GM12878 (cell line): ENCODE measurements at regions of chr4 and their contacts with region 1.

Region 1: GRCh38 chr4:93764639-93765246 is 63.8 kb upstream of the ATOH1 start:
- DNase-seq: no peak
- ATAC-seq: peak; percentile 86
- H3K4me3 ChIP-seq: no peak overlapping the region
- H3K27ac ChIP-seq: no peak overlapping the region
- H3K4me1 ChIP-seq: no peaks in the 10 kb centered on the region
- H3K27me3 ChIP-seq: no peaks in the 10 kb centered on the region; a peak in 1 of 4 replicates
- CTCF ChIP-seq: peak; percentile 62 to 83 (median 65); a peak in 5 of 6 replicates
- EP300 ChIP-seq: no peak
- POLR2A ChIP-seq: no peak
- RAD21 ChIP-seq: peak; percentile 100

Region 2: DNA sequence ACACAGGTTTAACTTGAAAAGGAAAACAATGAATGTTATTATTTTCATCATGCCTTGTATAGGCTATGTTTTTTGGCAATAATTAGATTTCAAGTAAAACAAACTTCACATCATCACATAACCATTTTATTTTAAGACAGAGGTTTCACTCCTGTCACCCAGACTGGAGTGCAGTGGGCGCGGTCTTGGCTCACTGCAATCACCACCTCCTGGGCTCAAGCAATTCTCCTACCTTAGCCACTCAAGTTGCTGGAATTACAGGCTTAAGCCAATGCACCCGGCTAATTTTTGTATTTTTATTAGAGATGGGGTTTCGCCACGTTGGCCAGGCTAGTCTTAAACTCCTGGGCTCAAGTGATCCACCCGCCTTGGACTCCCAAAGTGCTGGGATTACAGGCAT is 594.8 kb before region 1 on chr4:
- CTCF ChIA-PET with region 1: no interaction called
- POLR2A ChIA-PET with region 1: no interaction called
- RAD21 ChIA-PET with region 1: no interaction called
- SMC1A ChIA-PET with region 1: no interaction called
- in situ Hi-C with region 1: no loop called
- intact Hi-C with region 1: loop called (anchors 10 kb)
- DNase-seq: no peak
- ATAC-seq: no peak
- H3K4me3 ChIP-seq: no peak overlapping the region
- H3K27ac ChIP-seq: no peak overlapping the region
- H3K4me1 ChIP-seq: no peaks in the 10 kb centered on the region
- H3K27me3 ChIP-seq: no peaks in the 10 kb centered on the region
- CTCF ChIP-seq: no peak
- EP300 ChIP-seq: no peak
- POLR2A ChIP-seq: no peak
- RAD21 ChIP-seq: no peak

Region 3: DNA sequence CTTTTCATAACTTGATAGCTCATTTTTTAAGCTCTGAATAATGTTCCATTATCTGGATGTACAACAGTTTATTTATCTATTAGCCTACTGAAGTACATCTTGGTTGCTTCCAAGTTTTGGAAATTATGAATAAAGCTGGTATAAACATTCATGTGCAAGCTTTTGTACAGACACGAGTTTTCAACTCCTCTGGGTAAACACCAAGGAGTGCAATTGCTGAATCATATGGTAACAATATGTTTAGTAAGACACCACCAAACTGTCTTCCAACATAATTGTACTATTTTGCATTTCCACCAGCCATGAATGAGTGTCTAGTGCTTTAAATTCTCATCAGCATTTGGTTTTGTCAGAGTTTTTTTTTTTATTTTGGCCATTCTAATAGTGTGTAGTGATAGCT is 202.9 kb before region 1 on chr4:
- CTCF ChIA-PET with region 1: no interaction called
- POLR2A ChIA-PET with region 1: no interaction called
- RAD21 ChIA-PET with region 1: no interaction called
- SMC1A ChIA-PET with region 1: interaction called, 3 read pairs
- in situ Hi-C with region 1: no loop called
- intact Hi-C with region 1: loop called (anchors 10 kb)
- DNase-seq: no peak
- ATAC-seq: no peak
- H3K4me3 ChIP-seq: no peak overlapping the region
- H3K27ac ChIP-seq: no peak overlapping the region
- H3K4me1 ChIP-seq: no peaks in the 10 kb centered on the region
- H3K27me3 ChIP-seq: no peaks in the 10 kb centered on the region
- CTCF ChIP-seq: no peak
- EP300 ChIP-seq: no peak
- POLR2A ChIP-seq: no peak
- RAD21 ChIP-seq: no peak

Region 4: GRCh38 chr4:93684571-93684970 is 80.2 kb before region 1 on chr4:
- CTCF ChIA-PET with region 1: no interaction called
- POLR2A ChIA-PET with region 1: no interaction called
- RAD21 ChIA-PET with region 1: no interaction called
- SMC1A ChIA-PET with region 1: no interaction called
- in situ Hi-C with region 1: no loop called
- intact Hi-C with region 1: no loop called
- DNase-seq: no peak
- ATAC-seq: no peak
- H3K4me3 ChIP-seq: no peak overlapping the region
- H3K27ac ChIP-seq: no peak overlapping the region
- H3K4me1 ChIP-seq: no peaks in the 10 kb centered on the region
- H3K27me3 ChIP-seq: no peaks in the 10 kb centered on the region; a peak in 1 of 4 replicates
- CTCF ChIP-seq: no peak
- EP300 ChIP-seq: no peak
- POLR2A ChIP-seq: no peak
- RAD21 ChIP-seq: no peak

Region 5: GRCh38 chr4:93700571-93700970 is 64.2 kb before region 1 on chr4:
- CTCF ChIA-PET with region 1: interaction called, 3 read pairs
- POLR2A ChIA-PET with region 1: no interaction called
- RAD21 ChIA-PET with region 1: no interaction called
- SMC1A ChIA-PET with region 1: interaction called, 4 read pairs
- in situ Hi-C with region 1: loop called (anchors 10 kb)
- intact Hi-C with region 1: no loop called
- DNase-seq: no peak
- ATAC-seq: no peak
- H3K4me3 ChIP-seq: no peak overlapping the region
- H3K27ac ChIP-seq: no peak overlapping the region
- H3K4me1 ChIP-seq: no peaks in the 10 kb centered on the region
- H3K27me3 ChIP-seq: no peaks in the 10 kb centered on the region
- CTCF ChIP-seq: no peak
- EP300 ChIP-seq: no peak
- POLR2A ChIP-seq: no peak
- RAD21 ChIP-seq: no peak

Region 6: GRCh38 chr4:93710101-93710846 is 54.5 kb before region 1 on chr4:
- CTCF ChIA-PET with region 1: interaction called, 82 read pairs
- POLR2A ChIA-PET with region 1: interaction called, 3 read pairs
- RAD21 ChIA-PET with region 1: interaction called, 13 read pairs
- SMC1A ChIA-PET with region 1: interaction called, 100 read pairs
- in situ Hi-C with region 1: loop called (anchors 10 kb)
- intact Hi-C with region 1: loop called (anchors 1 kb)
- DNase-seq: peak; percentile 4
- ATAC-seq: peak; percentile 94
- H3K4me3 ChIP-seq: no peak overlapping the region
- H3K27ac ChIP-seq: no peak overlapping the region
- H3K4me1 ChIP-seq: no peaks in the 10 kb centered on the region
- H3K27me3 ChIP-seq: no peaks in the 10 kb centered on the region
- CTCF ChIP-seq: peak; percentile 49 to 73 (median 55); a peak in 5 of 6 replicates
- EP300 ChIP-seq: no peak
- POLR2A ChIP-seq: no peak
- RAD21 ChIP-seq: peak; percentile 99

Region 7: DNA sequence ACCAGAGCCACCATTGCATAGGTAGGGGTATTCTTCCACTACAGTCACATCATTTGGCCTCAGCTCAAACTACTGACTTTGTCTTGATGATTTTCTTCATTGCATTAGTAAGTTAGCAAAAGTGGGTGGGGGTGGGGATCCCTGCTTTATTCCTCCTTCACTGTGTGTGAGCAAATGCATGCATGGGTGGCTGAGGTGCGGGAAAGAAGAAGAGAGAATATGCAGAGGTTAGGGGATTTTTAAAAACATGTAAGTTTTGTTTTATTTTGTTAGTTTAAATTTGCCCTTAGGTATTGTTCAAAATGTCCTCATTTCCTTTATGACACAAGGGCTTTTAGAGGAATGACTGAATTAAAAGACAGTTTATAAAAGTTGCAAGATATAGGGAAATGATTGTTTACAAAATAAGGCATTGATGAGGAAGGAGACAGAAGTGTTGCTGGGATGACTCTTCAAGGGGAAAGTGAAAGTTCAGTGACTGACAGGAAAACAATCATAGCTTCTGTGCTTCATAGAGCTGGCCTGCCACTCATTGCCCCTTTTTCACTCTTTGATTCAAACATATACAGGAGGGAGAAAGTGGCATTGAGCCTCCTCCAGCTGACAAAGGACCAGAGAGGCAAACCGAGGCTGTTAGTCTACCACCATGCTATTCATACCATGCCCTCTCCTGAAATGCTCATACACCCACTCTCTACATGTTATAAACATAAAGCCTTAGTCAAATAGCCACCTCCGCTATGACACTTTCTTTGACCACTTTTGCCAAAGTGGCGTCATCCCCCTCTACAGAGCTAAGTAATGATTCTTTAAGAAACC is 15.6 kb before region 1 on chr4:
- CTCF ChIA-PET with region 1: interaction called, 17 read pairs
- POLR2A ChIA-PET with region 1: interaction called, 5 read pairs
- RAD21 ChIA-PET with region 1: interaction called, 17 read pairs
- SMC1A ChIA-PET with region 1: interaction called, 13 read pairs
- in situ Hi-C with region 1: no loop called
- intact Hi-C with region 1: no loop called
- DNase-seq: peak; percentile 57
- ATAC-seq: peak; percentile 91
- H3K4me3 ChIP-seq: peak overlapping the region; percentile 31; the same call in 1 of the 2 replicates
- H3K27ac ChIP-seq: peak overlapping the region; percentile 69
- H3K4me1 ChIP-seq: peaks cover 10% of the 10 kb centered on the region; the same call in 1 of the 2 replicates
- H3K27me3 ChIP-seq: no peaks in the 10 kb centered on the region
- CTCF ChIP-seq: no peak
- EP300 ChIP-seq: peak; percentile 52 to 85; a peak in 2 of 4 replicates
- POLR2A ChIP-seq: no peak
- RAD21 ChIP-seq: no peak